ENCODE measurements at regions of chr5 and their contacts with region 1.

Region 1: GRCh38 chr5:107217721-107218130 is 453.0 kb downstream of the EFNA5 start:
- DNase-seq: peak; percentile 70 to 92
- H3K4me3 ChIP-seq: no peak overlapping the region
- H3K27ac ChIP-seq: peak overlapping the region; percentile 76 to 86
- H3K4me1 ChIP-seq: peaks cover 0 to 9% of the 10 kb centered on the region in 2 donors
- H3K27me3 ChIP-seq: no peaks in the 10 kb centered on the region
- CTCF ChIP-seq: no peak

Region 2: GRCh38 chr5:107253246-107253645 is 35.5 kb after region 1 on chr5:
- intact Hi-C with region 1: loop called (anchors 2 kb)
- DNase-seq: peak in 1 of 2 donors; percentile 66
- H3K4me3 ChIP-seq: peak overlapping the region in 1 of 2 donors; percentile 35
- H3K27ac ChIP-seq: peak overlapping the region; percentile 63 to 67
- H3K4me1 ChIP-seq: peaks cover 3 to 13% of the 10 kb centered on the region in 2 donors
- H3K27me3 ChIP-seq: no peaks in the 10 kb centered on the region
- CTCF ChIP-seq: no peak

Region 3: GRCh38 chr5:107680099-107680498 is 462.4 kb after region 1 on chr5:
- intact Hi-C with region 1: no loop called
- DNase-seq: no peak
- H3K4me3 ChIP-seq: no peak overlapping the region
- H3K27ac ChIP-seq: no peak overlapping the region
- H3K4me1 ChIP-seq: no peaks in the 10 kb centered on the region
- H3K27me3 ChIP-seq: no peaks in the 10 kb centered on the region
- CTCF ChIP-seq: no peak